MCF 10A (cell line): ENCODE measurements at regions of chr17 and their contacts with region 1.

Region 1: GRCh38 chr17:57033295-57033694 is 51.8 kb upstream of the AKAP1 start:
- DNase-seq: no peak
- H3K4me3 Mint-ChIP-seq: no peak overlapping the region
- H3K27ac Mint-ChIP-seq: no peak overlapping the region
- H3K4me1 Mint-ChIP-seq: peaks cover 12% of the 10 kb centered on the region
- H3K27me3 Mint-ChIP-seq: peaks cover 25% of the 10 kb centered on the region
- CTCF ChIP-seq: no peak

Region 2: GRCh38 chr17:57021226-57021940 is 11.9 kb before region 1 on chr17:
- CTCF ChIA-PET with region 1: no interaction called
- POLR2A ChIA-PET with region 1: interaction called, 13 read pairs
- intact Hi-C with region 1: no loop called
- DNase-seq: peak; percentile 82
- H3K4me3 Mint-ChIP-seq: no peak overlapping the region
- H3K27ac Mint-ChIP-seq: no peak overlapping the region
- H3K4me1 Mint-ChIP-seq: peaks cover 4% of the 10 kb centered on the region
- H3K27me3 Mint-ChIP-seq: no peaks in the 10 kb centered on the region
- CTCF ChIP-seq: no peak

Region 3: GRCh38 chr17:57051886-57052361 is 18.6 kb after region 1 on chr17:
- CTCF ChIA-PET with region 1: interaction called, 14 read pairs
- POLR2A ChIA-PET with region 1: interaction called, 6 read pairs
- intact Hi-C with region 1: no loop called
- DNase-seq: peak; percentile 8
- H3K4me3 Mint-ChIP-seq: no peak overlapping the region
- H3K27ac Mint-ChIP-seq: no peak overlapping the region
- H3K4me1 Mint-ChIP-seq: peaks cover 13% of the 10 kb centered on the region
- H3K27me3 Mint-ChIP-seq: no peaks in the 10 kb centered on the region
- CTCF ChIP-seq: no peak

Region 4: DNA sequence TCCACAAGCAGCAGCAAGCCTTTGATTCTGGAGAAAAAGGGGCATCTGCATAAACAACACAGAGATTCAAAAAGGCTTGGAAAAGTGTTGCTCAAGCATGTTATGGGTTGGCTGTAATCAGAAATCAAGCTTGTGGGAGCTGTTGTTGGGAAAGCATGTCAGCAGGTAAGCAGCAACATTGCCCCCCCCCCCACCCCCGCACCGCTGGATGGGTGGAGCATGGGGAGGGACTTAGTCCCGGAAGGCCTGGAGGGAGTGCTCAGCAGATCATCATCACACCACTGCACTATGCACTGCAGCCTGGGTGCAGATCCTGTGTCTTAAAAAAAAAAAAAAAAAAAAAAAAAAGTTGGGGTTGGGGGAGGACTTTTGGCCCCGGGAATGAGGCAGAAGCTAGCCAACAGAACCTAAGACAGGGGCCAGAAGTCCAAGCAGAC is 34.9 kb after region 1 on chr17:
- CTCF ChIA-PET with region 1: interaction called, 4 read pairs
- POLR2A ChIA-PET with region 1: interaction called, 12 read pairs
- intact Hi-C with region 1: no loop called
- DNase-seq: peak; percentile 75
- H3K4me3 Mint-ChIP-seq: no peak overlapping the region
- H3K27ac Mint-ChIP-seq: no peak overlapping the region
- H3K4me1 Mint-ChIP-seq: no peaks in the 10 kb centered on the region
- H3K27me3 Mint-ChIP-seq: no peaks in the 10 kb centered on the region
- CTCF ChIP-seq: no peak